Activated naive CD4-positive, alpha-beta T cell treated with anti-CD3 and anti-CD28 coated beads for 36 hours (primary cell): ENCODE measurements at regions of chr6 and their contacts with region 1.

Region 1: GRCh38 chr6:100479179-100480035 is 14.7 kb upstream of the SIM1 start:
- DNase-seq: no peak
- H3K4me3 Mint-ChIP-seq: no peak overlapping the region
- H3K27ac Mint-ChIP-seq: no peak overlapping the region
- H3K4me1 Mint-ChIP-seq: no peaks in the 10 kb centered on the region
- H3K27me3 Mint-ChIP-seq: peaks cover 15% of the 10 kb centered on the region

Region 2: DNA sequence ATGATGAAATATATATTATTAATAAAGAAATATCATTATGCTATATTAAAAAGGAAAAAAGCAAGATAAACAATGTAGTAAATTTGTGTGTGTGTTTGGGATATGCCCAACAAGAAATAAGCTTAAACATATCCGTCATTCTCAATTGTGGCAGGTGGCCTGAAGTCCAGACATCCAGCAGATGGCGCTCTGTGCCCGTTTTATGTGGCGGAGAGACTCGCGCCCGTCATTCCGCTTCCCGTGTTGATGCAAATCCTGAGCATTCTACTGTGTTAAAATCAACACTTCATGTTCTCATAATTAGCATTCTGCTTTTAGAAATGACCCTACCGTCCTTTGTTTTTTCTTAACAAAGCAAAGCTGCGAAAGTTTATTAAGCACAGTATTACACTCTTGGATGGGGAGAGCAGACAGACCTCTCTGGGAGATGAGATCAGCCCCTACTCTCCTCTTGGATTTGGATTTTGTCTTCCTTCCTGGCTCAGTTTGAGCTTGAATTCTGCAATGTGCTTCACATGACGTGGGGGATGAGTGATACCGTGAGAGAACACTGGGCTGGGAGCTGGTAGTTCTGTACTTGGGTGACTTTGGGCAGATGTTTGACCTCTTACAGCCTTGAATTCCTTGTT is 611.2 kb before region 1 on chr6:
- CTCF ChIA-PET with region 1: interaction called, 7 read pairs
- intact Hi-C with region 1: loop called (anchors 2 kb)
- DNase-seq: peak; percentile 87
- H3K4me3 Mint-ChIP-seq: no peak overlapping the region
- H3K27ac Mint-ChIP-seq: no peak overlapping the region
- H3K4me1 Mint-ChIP-seq: peaks cover 5% of the 10 kb centered on the region
- H3K27me3 Mint-ChIP-seq: peaks cover 30% of the 10 kb centered on the region

Region 3: DNA sequence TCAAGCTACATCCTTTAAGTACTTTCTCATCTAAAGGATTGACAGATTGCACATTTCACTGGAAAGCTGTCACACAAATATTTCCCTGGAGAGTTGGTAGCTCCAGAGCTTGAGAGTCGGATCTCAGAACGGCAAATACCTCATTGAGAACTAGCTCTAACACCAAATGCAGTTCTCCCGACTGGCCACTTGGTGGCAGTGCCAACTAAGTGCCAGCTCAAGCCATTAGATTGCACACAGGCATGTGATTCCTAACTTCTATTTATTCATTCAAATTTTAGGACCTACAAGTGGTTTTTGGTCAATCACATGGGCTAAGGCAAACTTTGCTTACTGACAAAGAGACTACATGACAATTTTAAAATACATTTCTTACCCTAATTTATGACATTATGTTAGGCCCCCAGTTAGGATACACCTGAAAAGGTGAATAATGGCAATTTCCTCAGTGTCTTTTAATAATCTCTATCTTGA is 477.5 kb before region 1 on chr6:
- CTCF ChIA-PET with region 1: interaction called, 3 read pairs
- intact Hi-C with region 1: loop called (anchors 1 kb)
- DNase-seq: peak; percentile 51
- H3K4me3 Mint-ChIP-seq: no peak overlapping the region
- H3K27ac Mint-ChIP-seq: no peak overlapping the region
- H3K4me1 Mint-ChIP-seq: no peaks in the 10 kb centered on the region
- H3K27me3 Mint-ChIP-seq: peaks cover 18% of the 10 kb centered on the region

Region 4: GRCh38 chr6:100105138-100105753 is 374.2 kb before region 1 on chr6:
- CTCF ChIA-PET with region 1: interaction called, 4 read pairs
- intact Hi-C with region 1: loop called (anchors 1 kb)
- DNase-seq: no peak
- H3K4me3 Mint-ChIP-seq: no peak overlapping the region
- H3K27ac Mint-ChIP-seq: no peak overlapping the region
- H3K4me1 Mint-ChIP-seq: no peaks in the 10 kb centered on the region
- H3K27me3 Mint-ChIP-seq: peaks cover 7% of the 10 kb centered on the region

Region 5: GRCh38 chr6:100116411-100117194 is 362.8 kb before region 1 on chr6:
- CTCF ChIA-PET with region 1: no interaction called
- intact Hi-C with region 1: loop called (anchors 1 kb)
- DNase-seq: peak; percentile 42
- H3K4me3 Mint-ChIP-seq: no peak overlapping the region
- H3K27ac Mint-ChIP-seq: no peak overlapping the region
- H3K4me1 Mint-ChIP-seq: no peaks in the 10 kb centered on the region
- H3K27me3 Mint-ChIP-seq: peaks cover 9% of the 10 kb centered on the region

Region 6: DNA sequence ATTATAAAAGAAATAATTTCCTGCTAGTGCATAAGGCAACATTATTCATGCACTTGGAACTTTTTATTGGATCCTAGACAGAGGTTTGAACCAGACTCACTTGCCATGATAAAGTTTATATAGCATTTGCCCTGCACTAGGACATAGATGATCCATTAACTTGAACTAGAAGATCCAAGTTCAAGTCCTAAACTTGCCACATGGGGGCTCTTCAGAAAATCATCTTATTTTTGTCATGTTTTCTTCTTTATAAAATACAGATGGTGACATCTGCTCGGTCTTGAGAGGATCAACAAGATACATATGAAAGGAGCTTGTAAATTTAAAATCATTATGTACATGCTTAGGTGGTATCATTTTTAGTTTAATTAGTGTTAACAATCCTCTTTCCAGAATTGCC is 109.1 kb before region 1 on chr6:
- CTCF ChIA-PET with region 1: no interaction called
- intact Hi-C with region 1: loop called (anchors 1 kb)
- DNase-seq: no peak
- H3K4me3 Mint-ChIP-seq: no peak overlapping the region
- H3K27ac Mint-ChIP-seq: no peak overlapping the region
- H3K4me1 Mint-ChIP-seq: no peaks in the 10 kb centered on the region
- H3K27me3 Mint-ChIP-seq: no peaks in the 10 kb centered on the region

Region 7: GRCh38 chr6:100503043-100503705 is 23.8 kb after region 1 on chr6:
- CTCF ChIA-PET with region 1: no interaction called
- intact Hi-C with region 1: no loop called
- DNase-seq: no peak
- H3K4me3 Mint-ChIP-seq: no peak overlapping the region
- H3K27ac Mint-ChIP-seq: no peak overlapping the region
- H3K4me1 Mint-ChIP-seq: no peaks in the 10 kb centered on the region
- H3K27me3 Mint-ChIP-seq: peaks cover 9% of the 10 kb centered on the region

Region 8: GRCh38 chr6:100657678-100658330 is 178.4 kb after region 1 on chr6:
- CTCF ChIA-PET with region 1: no interaction called
- intact Hi-C with region 1: loop called (anchors 5 kb)
- DNase-seq: no peak
- H3K4me3 Mint-ChIP-seq: no peak overlapping the region
- H3K27ac Mint-ChIP-seq: no peak overlapping the region
- H3K4me1 Mint-ChIP-seq: no peaks in the 10 kb centered on the region
- H3K27me3 Mint-ChIP-seq: no peaks in the 10 kb centered on the region